HCT116 (cell line): ENCODE measurements at regions of chr4 and their contacts with region 1.

Region 1: GRCh38 chr4:37452952-37453280 is 208.4 kb downstream of the NWD2 start:
- DNase-seq: peak; percentile 58
- ATAC-seq: peak; percentile 93
- H3K4me3 ChIP-seq: no peak overlapping the region
- H3K27ac ChIP-seq: no peak overlapping the region
- H3K4me1 ChIP-seq: no peaks in the 10 kb centered on the region
- H3K27me3 ChIP-seq: no peaks in the 10 kb centered on the region
- CTCF ChIP-seq: peak; percentile 57 to 80 (median 73)
- POLR2A ChIP-seq: no peak
- RAD21 ChIP-seq: peak; percentile 82

Region 2: GRCh38 chr4:37279894-37280592 is 172.9 kb before region 1 on chr4:
- CTCF ChIA-PET with region 1: no interaction called
- POLR2A ChIA-PET with region 1: no interaction called
- RAD21 ChIA-PET with region 1: no interaction called
- intact Hi-C with region 1: no loop called
- DNase-seq: peak; percentile 33
- ATAC-seq: peak; percentile 94
- H3K4me3 ChIP-seq: no peak overlapping the region
- H3K27ac ChIP-seq: no peak overlapping the region
- H3K4me1 ChIP-seq: peaks cover 11 to 13% of the 10 kb centered on the region in 2 experiments; a peak in 3 of 4 replicates
- H3K27me3 ChIP-seq: no peaks in the 10 kb centered on the region
- CTCF ChIP-seq: no peak
- POLR2A ChIP-seq: no peak
- RAD21 ChIP-seq: no peak

Region 3: GRCh38 chr4:37441276-37441994 is 11.5 kb before region 1 on chr4:
- CTCF ChIA-PET with region 1: interaction called, 15 read pairs
- POLR2A ChIA-PET with region 1: interaction called, 4 read pairs
- RAD21 ChIA-PET with region 1: no interaction called
- intact Hi-C with region 1: no loop called
- DNase-seq: peak; percentile 84
- ATAC-seq: peak; percentile 91
- H3K4me3 ChIP-seq: peak overlapping the region in 1 of 2 experiments; percentile 4; a peak in 1 of 4 replicates
- H3K27ac ChIP-seq: no peak overlapping the region
- H3K4me1 ChIP-seq: peaks cover 10 to 22% of the 10 kb centered on the region in 2 experiments
- H3K27me3 ChIP-seq: no peaks in the 10 kb centered on the region
- CTCF ChIP-seq: no peak
- POLR2A ChIP-seq: no peak
- RAD21 ChIP-seq: no peak

Region 4: DNA sequence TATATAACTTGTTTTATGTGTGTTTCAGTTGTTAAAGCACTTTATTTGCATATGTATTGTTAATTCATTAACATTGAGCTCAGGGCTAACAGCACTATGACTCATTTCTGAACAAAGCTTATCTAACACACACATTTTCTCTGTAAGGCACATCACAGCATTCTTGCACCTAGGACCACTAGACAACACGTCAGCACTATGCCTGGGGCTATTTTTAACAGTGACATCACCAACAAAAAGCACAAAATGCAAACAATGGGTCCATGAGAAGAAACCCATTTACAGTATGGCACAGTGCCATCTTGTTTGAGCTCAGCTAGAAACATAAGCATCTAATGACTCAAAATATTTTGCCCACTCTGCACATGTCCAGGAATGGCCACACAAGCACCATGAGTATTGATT is 108.9 kb after region 1 on chr4:
- CTCF ChIA-PET with region 1: interaction called, 10 read pairs
- POLR2A ChIA-PET with region 1: no interaction called
- RAD21 ChIA-PET with region 1: interaction called in 1 of 2 experiments, 5 read pairs
- intact Hi-C with region 1: loop called (anchors 1 kb)
- DNase-seq: no peak
- ATAC-seq: no peak
- H3K4me3 ChIP-seq: no peak overlapping the region
- H3K27ac ChIP-seq: no peak overlapping the region
- H3K4me1 ChIP-seq: no peaks in the 10 kb centered on the region
- H3K27me3 ChIP-seq: no peaks in the 10 kb centered on the region
- CTCF ChIP-seq: no peak
- POLR2A ChIP-seq: no peak
- RAD21 ChIP-seq: no peak

Region 5: DNA sequence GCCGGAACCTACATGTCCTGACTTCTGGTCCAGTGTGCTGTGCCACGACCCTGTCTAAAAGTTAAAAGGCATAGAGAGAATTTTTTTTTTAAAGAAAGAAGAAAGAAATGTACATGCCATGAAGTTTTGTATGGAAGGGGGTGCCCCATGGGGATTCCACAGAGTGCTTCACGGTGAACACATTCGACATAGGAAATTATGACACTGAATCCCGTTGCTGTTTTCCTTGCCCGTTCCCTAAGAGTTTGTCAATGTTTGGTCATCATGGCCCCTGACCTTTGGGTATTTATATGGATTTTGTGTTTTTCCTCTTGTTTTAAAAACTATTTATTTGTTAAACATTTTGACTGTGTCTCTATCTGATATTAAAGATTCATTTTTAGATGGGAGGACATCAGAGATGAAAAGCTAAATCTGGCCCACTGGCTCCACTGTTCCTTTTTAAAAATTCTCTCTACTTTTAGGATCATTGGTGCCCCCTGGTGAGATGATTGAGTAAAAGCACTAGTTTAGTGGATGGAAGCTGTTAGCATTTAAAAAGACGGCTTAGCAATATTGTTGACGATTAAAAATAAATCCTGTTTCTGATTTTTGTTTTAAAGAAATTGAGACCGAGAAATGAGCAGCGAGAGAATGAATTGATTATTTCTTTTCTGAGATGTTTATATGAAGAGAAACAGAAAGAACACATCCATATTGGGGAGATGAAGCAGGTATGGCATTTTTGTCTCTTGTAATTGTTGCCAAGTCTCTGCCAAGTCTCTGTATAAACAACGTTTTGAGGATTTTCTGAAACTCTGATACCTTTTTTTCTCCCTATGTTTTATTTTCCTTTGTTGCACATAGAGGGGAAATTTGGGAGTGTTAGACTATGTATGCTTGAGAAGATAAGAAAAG is 582.3 kb after region 1 on chr4:
- CTCF ChIA-PET with region 1: interaction called, 3 read pairs
- POLR2A ChIA-PET with region 1: no interaction called
- RAD21 ChIA-PET with region 1: no interaction called
- intact Hi-C with region 1: loop called (anchors 5 kb)
- DNase-seq: peak; percentile 44
- ATAC-seq: peak; percentile 65; the same call in 1 of the 2 replicates
- H3K4me3 ChIP-seq: no peak overlapping the region
- H3K27ac ChIP-seq: no peak overlapping the region
- H3K4me1 ChIP-seq: no peaks in the 10 kb centered on the region
- H3K27me3 ChIP-seq: no peaks in the 10 kb centered on the region
- CTCF ChIP-seq: peak; percentile 56 to 74 (median 69); a peak in 5 of 6 replicates
- POLR2A ChIP-seq: no peak
- RAD21 ChIP-seq: peak; percentile 79